Posterior vena cava (tissue), 2 donors: ENCODE measurements at regions of chr2 and their contacts with region 1.

Region 1: GRCh38 chr2:139465789-139466188 is 685.6 kb upstream of the NXPH2 start:
- DNase-seq: no peak

Region 2: GRCh38 chr2:139885921-139886498 is 420.2 kb after region 1 on chr2:
- intact Hi-C with region 1: loop called in 1 of 2 experiments (anchors 5 kb)
- DNase-seq: no peak